GM10248 (cell line): ENCODE measurements at regions of chr17 and their contacts with region 1.

Region 1: GRCh38 chr17:18260332-18261144 is at the start of gene MIEF2:
- DNase-seq: peak; percentile 98
- CTCF ChIP-seq: no peak

Region 2: DNA sequence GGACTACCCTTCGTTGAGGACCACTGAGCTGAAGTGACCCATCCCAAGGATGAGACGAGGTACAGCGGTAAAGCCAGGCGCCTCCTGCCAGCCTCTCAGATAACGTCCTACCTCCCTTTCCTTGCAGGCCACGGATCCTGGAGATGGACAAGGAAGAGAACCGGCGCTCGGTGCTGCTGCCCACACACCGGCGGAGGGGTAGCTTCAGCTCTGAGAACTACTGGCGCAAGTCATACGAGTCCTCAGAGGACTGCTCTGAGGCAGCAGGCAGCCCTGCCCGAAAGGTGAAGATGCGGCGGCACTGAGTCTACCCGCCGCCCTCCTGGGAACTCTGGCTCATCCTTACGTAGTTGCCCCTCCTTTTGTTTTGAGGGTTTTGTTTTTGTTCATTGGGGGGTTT is 52.4 kb before region 1 on chr17:
- CTCF ChIA-PET with region 1: no interaction called
- POLR2A ChIA-PET with region 1: no interaction called
- DNase-seq: no peak
- CTCF ChIP-seq: no peak

Region 3: DNA sequence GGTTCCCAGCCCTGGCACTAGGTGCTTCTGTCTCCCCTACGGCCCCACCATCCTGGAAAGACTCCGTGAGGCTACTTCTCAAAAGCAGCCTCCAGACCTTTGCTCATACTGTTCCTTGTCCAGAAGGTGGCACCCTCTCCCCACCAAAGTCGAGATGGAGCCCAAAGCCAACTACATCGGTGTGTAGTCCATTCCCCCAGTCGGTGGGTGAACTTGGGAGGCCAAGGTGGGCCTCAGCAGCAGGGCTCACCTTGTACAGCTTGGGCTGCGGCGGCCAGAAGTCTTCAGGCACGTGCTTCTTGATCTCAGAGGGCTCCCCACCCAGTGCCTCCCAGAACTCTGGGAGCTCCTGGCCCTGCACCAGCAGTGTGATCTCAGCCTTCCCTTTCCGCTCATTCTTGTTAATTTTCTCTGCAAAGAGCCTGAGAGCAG is 12.2 kb before region 1 on chr17:
- CTCF ChIA-PET with region 1: interaction called, 27 read pairs
- POLR2A ChIA-PET with region 1: no interaction called
- DNase-seq: peak; percentile 89
- CTCF ChIP-seq: peak; percentile 77

Region 4: DNA sequence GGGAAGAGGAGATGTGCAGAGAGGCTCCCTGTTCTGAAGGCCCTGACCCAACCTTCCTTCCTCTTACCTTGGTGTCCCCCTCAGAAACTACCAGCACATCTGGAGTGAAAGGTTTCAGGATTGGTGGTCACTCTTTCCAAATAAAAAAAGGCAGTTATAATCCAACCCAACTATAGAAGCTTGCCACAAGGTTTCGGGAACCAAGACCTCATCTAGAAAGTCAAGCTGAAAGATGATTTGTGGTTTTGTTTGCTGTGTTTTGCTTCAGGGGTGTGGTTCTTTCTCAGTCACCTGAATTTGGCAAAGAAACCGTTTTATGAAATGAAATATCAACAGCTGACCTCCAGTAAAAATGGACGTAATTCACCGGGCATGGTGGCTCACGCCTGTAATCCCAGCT is 83.5 kb after region 1 on chr17:
- CTCF ChIA-PET with region 1: no interaction called
- POLR2A ChIA-PET with region 1: no interaction called
- DNase-seq: peak; percentile 45
- CTCF ChIP-seq: no peak

Region 5: GRCh38 chr17:19546289-19547065 is 1285.9 kb after region 1 on chr17:
- CTCF ChIA-PET with region 1: no interaction called
- POLR2A ChIA-PET with region 1: no interaction called
- DNase-seq: no peak
- CTCF ChIP-seq: peak; percentile 14